ENCODE measurements at regions of chr1 and their contacts with region 1.

Region 1: DNA sequence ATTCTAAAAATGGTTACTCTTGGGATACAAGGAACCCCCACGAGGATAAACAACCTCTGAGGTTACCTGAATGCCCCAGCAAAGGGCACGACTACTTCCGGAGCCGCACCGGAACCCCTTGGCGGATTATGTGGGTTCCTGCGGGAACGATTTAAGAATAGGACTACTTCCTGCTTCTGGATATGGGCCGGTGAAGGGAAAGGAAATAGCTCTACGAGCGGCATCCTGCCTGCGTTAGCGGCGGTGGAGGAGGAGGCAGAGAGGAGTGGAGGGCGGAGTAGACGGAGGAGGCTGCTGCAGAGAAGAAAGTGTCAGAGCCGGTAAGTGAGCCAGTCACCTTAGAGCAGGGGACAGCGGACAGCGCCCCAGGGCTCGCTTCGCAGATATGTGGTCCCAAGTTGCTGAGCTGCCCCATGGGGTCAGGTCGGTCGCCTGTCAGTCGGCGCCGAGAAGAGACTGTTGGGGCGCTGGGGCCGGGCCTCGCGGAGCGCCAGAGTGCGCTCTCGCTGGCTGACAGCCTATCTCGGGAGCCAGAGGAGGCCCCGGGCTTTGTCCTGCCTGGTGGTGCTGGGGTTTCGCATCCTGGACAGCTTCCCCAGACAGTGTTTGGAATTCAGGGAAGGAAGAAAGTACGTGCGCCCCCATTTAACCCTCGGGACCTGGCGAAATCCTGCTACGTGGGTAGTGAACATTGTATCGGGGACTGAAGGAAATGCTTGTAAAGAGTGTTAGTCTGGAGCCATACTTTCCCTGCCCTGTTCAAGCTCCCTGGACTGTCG is at the start of gene KLHL20:
- DNase-seq: peak; percentile 89
- H3K4me3 Mint-ChIP-seq: peak within 1 kb of the TSS; percentile 90
- H3K27ac Mint-ChIP-seq: peak within 1 kb of the TSS; percentile 97
- H3K4me1 Mint-ChIP-seq: peaks cover 24% of the 10 kb centered on the region
- H3K27me3 Mint-ChIP-seq: peaks cover 21% of the 10 kb centered on the region
- total RNA-seq, gene KLHL20: 17.7 to 18.9 TPM

Region 2: DNA sequence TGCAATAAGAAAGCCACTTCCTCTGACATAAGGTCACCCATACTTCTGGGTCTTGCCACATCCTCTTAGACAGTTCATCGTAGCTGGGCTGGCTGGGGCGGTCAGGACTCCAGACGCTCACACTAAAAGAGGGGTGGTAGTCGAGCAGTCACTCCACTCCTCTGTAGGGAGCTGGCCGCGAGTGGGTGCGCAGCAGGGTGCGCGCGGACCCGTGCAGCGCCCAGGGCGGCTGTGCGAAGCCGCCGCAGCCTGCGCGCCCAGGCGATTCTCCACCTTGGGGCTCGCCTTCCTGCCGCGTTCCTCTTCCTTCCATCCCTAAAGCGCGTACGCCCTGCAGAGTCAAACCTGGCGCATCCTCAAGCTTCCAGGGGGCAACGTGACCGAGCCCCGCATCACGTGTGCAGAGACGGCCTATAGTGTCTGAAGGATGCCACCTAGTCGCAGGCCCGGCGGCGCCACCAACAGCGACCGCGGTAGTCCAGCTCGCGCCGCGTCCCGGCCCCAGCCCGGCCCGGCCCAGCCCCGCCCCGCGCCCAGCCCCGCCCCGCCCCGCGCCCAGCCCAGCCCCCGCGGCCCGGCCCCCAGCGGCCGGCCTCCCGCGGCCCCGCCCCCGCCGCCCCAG is 238.2 kb before region 1 on chr1:
- CTCF ChIA-PET with region 1: interaction called, 5 read pairs
- POLR2A ChIA-PET with region 1: interaction called, 35 read pairs
- DNase-seq: peak; percentile 85
- H3K4me3 Mint-ChIP-seq: peak overlapping the region; percentile 91
- H3K27ac Mint-ChIP-seq: peak overlapping the region; percentile 95
- H3K4me1 Mint-ChIP-seq: peaks cover 56% of the 10 kb centered on the region
- H3K27me3 Mint-ChIP-seq: no peaks in the 10 kb centered on the region

Region 3: DNA sequence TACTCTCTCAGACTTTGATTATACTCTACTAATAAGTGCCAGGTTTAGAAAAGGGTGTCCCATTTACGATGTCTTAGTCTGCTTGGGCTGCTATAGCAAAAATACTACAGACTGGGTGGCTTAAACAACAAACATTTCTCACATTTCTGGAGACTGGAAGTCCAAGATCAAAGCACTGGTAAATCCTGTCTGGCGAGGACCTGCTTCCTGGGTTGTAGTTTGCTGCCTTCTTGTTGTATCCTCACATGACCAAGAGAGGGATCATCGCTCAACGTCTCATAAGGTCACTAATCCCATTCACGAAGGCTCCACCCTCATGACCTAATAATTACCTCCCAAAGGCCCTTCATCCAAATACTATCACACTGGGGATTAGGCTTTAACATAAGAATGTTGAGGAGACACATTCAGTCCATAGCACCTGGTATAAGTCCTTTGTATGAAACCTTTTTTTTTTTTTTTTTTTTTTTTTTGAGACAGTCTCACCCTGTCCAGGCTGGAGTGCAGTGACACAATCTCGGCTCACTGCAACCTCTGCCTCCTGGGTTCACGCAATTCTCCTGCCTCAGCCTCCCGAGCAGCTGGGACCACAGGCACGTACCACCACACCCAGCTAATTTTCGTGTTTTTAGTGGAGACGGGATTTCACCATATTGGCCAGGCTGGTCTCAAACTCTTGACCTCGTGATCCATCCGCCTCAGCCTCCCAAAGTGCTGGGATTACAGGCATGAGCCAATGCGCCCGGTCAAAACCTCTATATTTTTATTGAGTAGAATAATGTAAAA is 225.6 kb before region 1 on chr1:
- CTCF ChIA-PET with region 1: no interaction called
- POLR2A ChIA-PET with region 1: no interaction called
- DNase-seq: no peak
- H3K4me3 Mint-ChIP-seq: no peak overlapping the region
- H3K27ac Mint-ChIP-seq: no peak overlapping the region
- H3K4me1 Mint-ChIP-seq: no peaks in the 10 kb centered on the region
- H3K27me3 Mint-ChIP-seq: no peaks in the 10 kb centered on the region